ENCODE measurements at regions of chr4 and their contacts with region 1.

Region 1: DNA sequence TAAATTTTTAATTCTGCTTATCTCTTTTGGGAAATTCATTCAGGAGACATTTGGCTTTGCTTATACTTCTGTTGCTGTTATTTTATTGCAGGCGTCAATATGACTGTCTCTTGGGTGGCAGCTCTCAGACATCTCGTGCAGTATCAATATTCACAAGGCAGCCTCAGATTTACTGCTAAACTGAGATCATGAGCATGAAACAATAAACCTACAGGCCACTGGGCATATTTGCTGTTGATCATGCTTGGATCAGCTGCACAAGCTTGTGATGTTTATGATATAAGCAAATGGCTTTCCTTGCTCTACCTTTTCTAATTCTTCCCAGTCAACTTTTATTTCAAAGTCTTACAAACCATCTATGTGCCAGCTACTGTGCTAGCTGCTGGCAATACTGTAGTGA is 39.2 kb downstream of the TSPAN5 start:
- DNase-seq: no peak
- H3K4me3 ChIP-seq: no peak overlapping the region
- H3K4me3 Mint-ChIP-seq: no peak overlapping the region
- H3K27ac ChIP-seq: no peak overlapping the region
- H3K27ac Mint-ChIP-seq: no peak overlapping the region
- H3K4me1 ChIP-seq: no peaks in the 10 kb centered on the region
- H3K4me1 Mint-ChIP-seq: peaks cover 30 to 70% (median 60%) of the 10 kb centered on the region in 3 donors
- H3K27me3 ChIP-seq: no peaks in the 10 kb centered on the region
- H3K27me3 Mint-ChIP-seq: peaks cover 0 to 2% of the 10 kb centered on the region in 2 donors

Region 2: DNA sequence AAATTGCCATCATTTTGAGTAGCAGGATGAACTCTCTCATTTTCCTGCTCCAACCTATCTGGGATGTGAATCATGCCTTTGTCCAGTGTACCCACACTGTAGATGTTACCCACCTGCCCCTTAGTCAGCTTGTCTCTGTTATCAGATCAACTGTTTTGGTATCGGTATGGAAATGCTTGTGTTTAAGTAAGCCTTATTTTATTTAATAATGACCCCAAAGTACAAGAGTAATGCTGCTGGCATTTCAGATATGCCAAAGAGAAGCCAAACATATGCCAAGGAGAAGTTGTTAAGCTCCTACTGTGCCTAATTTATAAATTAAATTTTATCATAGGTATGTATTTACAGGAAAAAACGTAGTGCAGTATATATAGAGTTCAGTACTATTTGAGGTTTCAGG is 376.6 kb before region 1 on chr4:
- CTCF ChIA-PET with region 1: no interaction called
- POLR2A ChIA-PET with region 1: interaction called, 12 read pairs
- DNase-seq: no peak
- H3K4me3 ChIP-seq: no peak overlapping the region
- H3K4me3 Mint-ChIP-seq: no peak overlapping the region
- H3K27ac ChIP-seq: no peak overlapping the region
- H3K27ac Mint-ChIP-seq: peak overlapping the region in 1 of 8 donors; percentile 39
- H3K4me1 ChIP-seq: no peaks in the 10 kb centered on the region
- H3K4me1 Mint-ChIP-seq: no peaks in the 10 kb centered on the region
- H3K27me3 ChIP-seq: no peaks in the 10 kb centered on the region
- H3K27me3 Mint-ChIP-seq: peaks cover 17 to 35% of the 10 kb centered on the region in 2 donors

Region 3: DNA sequence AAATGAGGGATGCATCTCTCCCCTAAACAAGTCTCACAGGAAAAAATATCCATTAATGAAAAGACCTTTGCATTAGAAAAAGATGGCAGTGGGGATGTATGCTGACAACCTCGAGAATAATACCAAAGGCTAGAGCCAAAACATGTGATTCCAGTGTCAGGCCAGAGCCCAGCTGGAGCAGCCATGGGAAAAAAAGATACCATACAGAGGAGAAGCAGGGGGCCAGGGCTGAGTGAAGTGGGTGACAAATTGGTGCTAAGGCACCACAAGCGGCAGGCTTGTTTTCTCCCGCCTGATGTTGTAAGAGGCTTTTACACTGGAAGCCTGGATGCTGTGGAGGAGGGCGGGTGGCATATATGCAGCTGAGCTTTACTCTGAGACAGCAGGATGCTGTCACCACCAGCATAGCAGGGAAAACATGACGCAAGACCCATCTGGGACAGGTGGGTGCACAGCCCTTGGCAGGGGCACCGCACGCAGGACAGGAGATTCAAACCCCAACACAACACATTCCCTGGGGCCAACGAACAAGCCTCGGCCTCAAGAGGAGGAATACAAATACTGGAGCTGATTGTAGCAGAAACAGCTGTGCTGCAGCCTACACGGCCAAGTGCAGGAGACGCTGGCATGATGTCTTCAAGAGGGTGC is 52.7 kb before region 1 on chr4:
- CTCF ChIA-PET with region 1: no interaction called
- POLR2A ChIA-PET with region 1: no interaction called
- DNase-seq: no peak
- H3K4me3 ChIP-seq: no peak overlapping the region
- H3K4me3 Mint-ChIP-seq: no peak overlapping the region
- H3K27ac ChIP-seq: no peak overlapping the region
- H3K27ac Mint-ChIP-seq: no peak overlapping the region
- H3K4me1 ChIP-seq: no peaks in the 10 kb centered on the region
- H3K4me1 Mint-ChIP-seq: peaks cover 11 to 43% (median 38%) of the 10 kb centered on the region in 3 donors
- H3K27me3 ChIP-seq: no peaks in the 10 kb centered on the region
- H3K27me3 Mint-ChIP-seq: no peaks in the 10 kb centered on the region

Region 4: DNA sequence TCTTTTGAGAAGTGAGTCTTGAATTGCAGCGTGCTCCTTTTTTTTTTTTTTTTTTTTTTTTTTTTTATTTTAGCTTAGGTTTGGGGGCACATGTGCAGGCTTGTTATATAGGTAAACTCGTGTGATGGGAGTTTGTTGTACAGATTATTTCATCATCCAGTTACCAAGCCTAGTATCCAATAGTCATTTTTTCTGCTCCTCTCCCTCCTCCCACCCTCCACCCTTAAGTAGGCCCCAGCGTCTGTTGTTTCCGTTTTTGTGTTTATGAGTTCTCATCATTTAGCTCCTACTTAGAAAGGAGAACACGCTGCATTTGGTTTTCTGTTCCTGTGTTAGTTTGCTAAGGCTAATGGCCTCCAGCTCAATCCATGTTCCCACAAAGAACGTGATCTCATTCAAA is 120.6 kb after region 1 on chr4:
- CTCF ChIA-PET with region 1: no interaction called
- POLR2A ChIA-PET with region 1: no interaction called
- DNase-seq: no peak
- H3K4me3 ChIP-seq: no peak overlapping the region
- H3K4me3 Mint-ChIP-seq: no peak overlapping the region
- H3K27ac ChIP-seq: no peak overlapping the region
- H3K27ac Mint-ChIP-seq: no peak overlapping the region
- H3K4me1 ChIP-seq: no peaks in the 10 kb centered on the region
- H3K4me1 Mint-ChIP-seq: no peaks in the 10 kb centered on the region
- H3K27me3 ChIP-seq: no peaks in the 10 kb centered on the region
- H3K27me3 Mint-ChIP-seq: peaks cover 0 to 1% of the 10 kb centered on the region in 2 donors